AG04449 (cell line): ENCODE measurements at regions of chr11 and their contacts with region 1.

Region 1: GRCh38 chr11:123511037-123511870 is 81.2 kb downstream of the GRAMD1B start:
- DNase-seq: peak; percentile 70
- H3K4me3 ChIP-seq: peak overlapping the region; percentile 25
- CTCF ChIP-seq: peak; percentile 95

Region 2: DNA sequence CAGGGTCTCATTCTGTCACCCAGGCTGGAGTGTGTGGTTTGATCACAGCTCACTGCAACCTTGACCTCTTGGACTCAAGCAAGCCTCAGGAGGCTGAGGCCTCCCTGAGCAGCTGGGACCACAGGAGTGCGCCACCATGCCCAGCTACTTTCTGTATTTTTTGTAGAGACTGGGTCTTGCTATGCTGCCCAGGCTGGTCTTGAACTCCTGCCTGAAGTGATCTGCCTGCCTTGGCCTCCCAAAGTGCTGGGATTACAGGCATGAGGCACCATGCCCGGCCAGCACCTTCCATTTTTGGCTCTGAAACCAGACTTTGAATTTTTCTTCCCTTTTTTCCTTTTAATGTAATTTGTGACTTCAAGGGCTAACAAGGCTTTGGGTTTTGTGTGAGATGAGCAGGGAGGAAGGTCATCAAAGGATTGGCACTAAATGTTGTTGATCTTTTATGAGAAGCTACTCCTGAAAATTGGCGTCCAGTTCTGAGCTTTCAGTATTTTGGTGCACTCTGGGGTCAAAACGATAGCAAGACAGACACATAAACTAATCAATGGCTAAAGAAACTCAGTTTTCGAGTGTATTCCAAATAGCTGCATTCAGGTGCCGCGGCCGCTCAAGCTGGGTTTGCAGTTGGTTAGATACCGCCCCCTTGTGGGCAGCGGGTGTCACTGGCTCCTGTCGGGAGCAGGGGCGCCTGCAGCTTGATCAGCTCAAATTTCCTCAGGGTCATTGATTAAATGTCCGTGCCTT is 264.3 kb before region 1 on chr11:
- CTCF ChIA-PET with region 1: no interaction called
- POLR2A ChIA-PET with region 1: no interaction called
- DNase-seq: no peak
- H3K4me3 ChIP-seq: no peak overlapping the region
- CTCF ChIP-seq: peak; percentile 91

Region 3: GRCh38 chr11:123494195-123495050 is 16.8 kb before region 1 on chr11:
- CTCF ChIA-PET with region 1: interaction called, 13 read pairs
- POLR2A ChIA-PET with region 1: no interaction called
- DNase-seq: no peak
- H3K4me3 ChIP-seq: no peak overlapping the region
- CTCF ChIP-seq: no peak

Region 4: GRCh38 chr11:123536690-123537437 is 25.6 kb after region 1 on chr11:
- CTCF ChIA-PET with region 1: interaction called, 11 read pairs
- POLR2A ChIA-PET with region 1: no interaction called
- DNase-seq: no peak
- H3K4me3 ChIP-seq: no peak overlapping the region
- CTCF ChIP-seq: no peak

Region 5: DNA sequence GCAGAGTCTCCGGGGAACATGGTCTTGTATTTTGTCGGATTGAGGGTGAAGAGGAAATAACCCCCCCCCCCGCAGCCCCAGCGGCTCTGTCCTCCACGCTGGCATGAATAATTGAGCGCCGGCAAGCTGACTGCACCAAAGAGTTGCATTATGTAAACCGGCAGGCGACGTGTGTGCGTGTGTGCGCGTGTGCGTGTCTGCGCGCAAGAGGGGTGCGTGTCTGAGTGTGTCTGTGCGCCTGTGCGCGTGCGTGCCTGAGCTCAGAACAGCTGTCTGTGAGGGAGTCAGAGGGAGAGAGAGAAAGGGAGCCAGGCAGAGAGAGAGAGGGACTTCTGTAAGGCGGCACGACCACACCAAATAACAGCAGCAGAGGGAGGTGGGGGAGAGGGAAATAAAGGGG is 48.8 kb after region 1 on chr11:
- CTCF ChIA-PET with region 1: interaction called, 75 read pairs
- POLR2A ChIA-PET with region 1: no interaction called
- DNase-seq: peak; percentile 59
- H3K4me3 ChIP-seq: peak overlapping the region; percentile 48
- CTCF ChIP-seq: no peak